Posterior vena cava (tissue), 2 donors: ENCODE measurements at regions of chr2 and their contacts with region 1.

Region 1: GRCh38 chr2:224778474-224778877 is 62.3 kb upstream of the CCDC195 start:
- DNase-seq: no peak

Region 2: GRCh38 chr2:222976521-222977076 is 1801.9 kb before region 1 on chr2:
- intact Hi-C with region 1: no loop called
- DNase-seq: no peak

Region 3: GRCh38 chr2:224492531-224492930 is 285.9 kb before region 1 on chr2:
- intact Hi-C with region 1: no loop called
- DNase-seq: no peak

Region 4: DNA sequence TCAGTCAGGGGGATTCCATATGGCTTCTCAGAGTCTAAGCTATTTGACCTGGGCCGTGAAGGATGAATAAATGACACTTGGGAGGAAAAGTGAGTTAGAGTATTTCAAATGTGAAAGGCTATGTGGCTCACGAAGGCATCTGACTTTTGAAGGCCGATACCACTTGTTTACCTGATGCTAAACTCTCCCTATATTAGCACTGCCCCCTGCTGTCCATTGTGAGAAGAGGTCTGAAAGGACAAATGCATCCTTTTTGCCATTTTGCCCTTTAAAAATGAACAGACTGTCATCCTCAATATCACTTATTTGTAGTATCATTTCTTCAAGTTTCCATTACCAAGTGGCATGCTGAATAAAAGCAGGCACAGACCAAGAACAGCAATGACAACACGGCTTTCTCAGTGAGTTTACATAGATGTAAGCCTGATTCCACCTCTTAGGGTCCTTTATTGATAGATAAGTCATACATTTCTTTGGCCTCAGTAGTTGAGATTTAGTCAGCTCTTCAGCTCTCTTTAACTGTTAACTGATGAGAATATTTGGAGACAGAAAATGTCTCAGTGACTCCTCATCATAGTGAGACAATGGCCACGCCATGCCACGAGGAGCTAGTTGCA is 223.7 kb after region 1 on chr2:
- intact Hi-C with region 1: loop called in 1 of 2 experiments (anchors 10 kb)
- DNase-seq: no peak

Region 5: DNA sequence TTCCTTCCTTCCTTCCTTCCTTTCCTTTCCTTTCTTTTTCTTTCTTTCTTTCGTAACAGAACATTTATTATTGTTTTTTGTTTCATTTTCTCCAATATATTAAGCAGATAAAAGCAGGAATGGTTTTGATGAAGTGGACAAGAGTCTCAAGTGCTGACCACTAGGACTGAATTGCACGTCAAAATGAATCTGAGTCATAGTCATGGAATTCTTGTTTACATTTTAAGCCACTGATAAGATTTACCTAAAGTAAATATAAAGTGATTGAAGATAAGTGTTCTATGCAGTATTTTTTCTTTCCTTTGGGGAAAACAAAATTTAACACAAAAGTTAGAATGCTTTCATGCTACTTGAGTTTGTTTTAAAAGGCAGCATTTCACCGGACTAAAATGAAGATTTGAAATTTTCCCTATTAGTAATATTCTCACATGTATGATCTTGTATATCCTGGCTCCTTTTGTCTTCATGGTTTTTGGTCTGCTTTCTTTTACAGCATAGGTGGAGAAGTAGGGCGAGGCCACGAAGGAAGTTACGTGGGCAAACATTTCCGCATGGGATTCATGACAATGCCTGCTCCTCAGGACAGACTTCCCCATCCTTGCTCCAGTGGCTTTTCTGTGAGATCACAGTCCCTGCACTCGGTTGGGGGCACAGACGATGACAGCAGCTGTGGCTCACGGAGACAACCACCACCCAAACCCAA is 734.6 kb after region 1 on chr2:
- intact Hi-C with region 1: no loop called
- DNase-seq: no peak